BJ (cell line): ENCODE measurements at regions of chr1 and their contacts with region 1.

Region 1: GRCh38 chr1:22861764-22862440 is 110.8 kb downstream of the LACTBL1 start:
- DNase-seq: no peak
- H3K4me3 ChIP-seq: no peak overlapping the region
- H3K27me3 ChIP-seq: no peaks in the 10 kb centered on the region
- CTCF ChIP-seq: peak; percentile 95

Region 2: GRCh38 chr1:22745669-22746585 is 116.0 kb before region 1 on chr1:
- CTCF ChIA-PET with region 1: interaction called, 12 read pairs
- POLR2A ChIA-PET with region 1: no interaction called
- DNase-seq: peak; percentile 19
- H3K4me3 ChIP-seq: no peak overlapping the region
- H3K27me3 ChIP-seq: no peaks in the 10 kb centered on the region
- CTCF ChIP-seq: no peak

Region 3: GRCh38 chr1:22835636-22836319 is 26.1 kb before region 1 on chr1:
- CTCF ChIA-PET with region 1: interaction called, 15 read pairs
- POLR2A ChIA-PET with region 1: no interaction called
- DNase-seq: no peak
- H3K4me3 ChIP-seq: no peak overlapping the region
- H3K27me3 ChIP-seq: no peaks in the 10 kb centered on the region
- CTCF ChIP-seq: no peak

Region 4: GRCh38 chr1:22876359-22877111 is 14.6 kb after region 1 on chr1:
- CTCF ChIA-PET with region 1: interaction called, 42 read pairs
- POLR2A ChIA-PET with region 1: no interaction called
- DNase-seq: no peak
- H3K4me3 ChIP-seq: no peak overlapping the region
- H3K27me3 ChIP-seq: no peaks in the 10 kb centered on the region
- CTCF ChIP-seq: no peak

Region 5: DNA sequence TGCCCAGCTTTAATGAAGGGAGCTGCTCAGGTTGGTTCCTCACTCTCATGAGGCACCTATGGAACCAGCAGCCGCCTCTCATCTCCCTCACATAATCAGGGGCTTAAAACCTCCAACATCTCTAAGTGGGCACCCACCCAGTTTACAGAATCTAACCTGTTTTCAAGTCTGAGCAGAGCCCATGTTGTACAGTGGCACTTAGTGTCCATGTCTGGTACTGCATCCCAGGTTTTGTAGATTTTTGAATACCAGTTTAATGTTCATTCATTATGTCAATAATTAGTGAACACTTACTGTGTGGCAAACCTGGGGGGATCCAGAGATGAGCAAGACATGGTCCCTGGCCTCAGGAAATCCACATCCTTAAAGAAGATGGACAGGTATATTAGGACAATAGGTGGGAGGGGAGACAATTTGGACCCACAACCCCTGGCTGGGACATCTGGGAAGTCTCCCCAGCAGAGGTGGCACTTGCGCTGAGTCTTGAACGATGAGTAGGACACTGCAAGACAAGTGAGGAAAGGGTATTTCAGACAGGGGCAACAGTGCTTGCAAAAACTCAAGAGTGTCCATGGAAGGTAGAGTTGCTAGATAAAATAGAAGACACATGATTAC is 27.4 kb after region 1 on chr1:
- CTCF ChIA-PET with region 1: interaction called, 12 read pairs
- POLR2A ChIA-PET with region 1: no interaction called
- DNase-seq: no peak
- H3K4me3 ChIP-seq: no peak overlapping the region
- H3K27me3 ChIP-seq: no peaks in the 10 kb centered on the region
- CTCF ChIP-seq: peak; percentile 83